Motor neuron (in vitro differentiated cells): ENCODE measurements at regions of chr17 and their contacts with region 1.

Region 1: DNA sequence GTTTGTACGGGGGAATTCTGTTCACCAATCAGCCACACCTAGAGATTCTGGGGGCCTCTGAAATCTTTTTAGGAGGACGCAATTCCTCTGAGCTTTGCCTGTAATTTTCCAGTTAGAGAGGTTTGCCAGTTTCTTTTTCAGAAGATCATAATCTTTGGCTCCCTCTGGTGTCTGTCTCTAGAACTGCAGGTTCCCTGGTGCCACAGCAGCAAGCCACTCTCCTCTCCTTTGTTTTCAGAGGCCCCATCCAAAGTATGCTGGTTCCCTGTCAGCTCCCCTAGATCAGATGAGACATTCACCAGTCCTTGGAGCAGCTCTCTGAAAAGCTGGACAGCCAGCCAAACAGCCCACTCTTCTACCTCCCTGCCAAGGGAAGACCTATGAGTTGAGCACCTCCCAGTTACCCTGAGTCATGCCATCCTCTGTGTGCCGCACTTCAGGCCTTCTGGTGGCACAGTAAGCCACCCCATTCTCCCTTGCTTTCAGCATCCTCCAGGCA is 36.1 kb downstream of the RNF112 start:
- ATAC-seq: peak in 7 of 8 experiments; percentile 5 to 49 (median 39)
- H3K4me3 ChIP-seq: no peak overlapping the region
- H3K27ac ChIP-seq: no peak overlapping the region
- H3K4me1 ChIP-seq: peaks cover 24 to 25% of the 10 kb centered on the region in 2 donors

Region 2: DNA sequence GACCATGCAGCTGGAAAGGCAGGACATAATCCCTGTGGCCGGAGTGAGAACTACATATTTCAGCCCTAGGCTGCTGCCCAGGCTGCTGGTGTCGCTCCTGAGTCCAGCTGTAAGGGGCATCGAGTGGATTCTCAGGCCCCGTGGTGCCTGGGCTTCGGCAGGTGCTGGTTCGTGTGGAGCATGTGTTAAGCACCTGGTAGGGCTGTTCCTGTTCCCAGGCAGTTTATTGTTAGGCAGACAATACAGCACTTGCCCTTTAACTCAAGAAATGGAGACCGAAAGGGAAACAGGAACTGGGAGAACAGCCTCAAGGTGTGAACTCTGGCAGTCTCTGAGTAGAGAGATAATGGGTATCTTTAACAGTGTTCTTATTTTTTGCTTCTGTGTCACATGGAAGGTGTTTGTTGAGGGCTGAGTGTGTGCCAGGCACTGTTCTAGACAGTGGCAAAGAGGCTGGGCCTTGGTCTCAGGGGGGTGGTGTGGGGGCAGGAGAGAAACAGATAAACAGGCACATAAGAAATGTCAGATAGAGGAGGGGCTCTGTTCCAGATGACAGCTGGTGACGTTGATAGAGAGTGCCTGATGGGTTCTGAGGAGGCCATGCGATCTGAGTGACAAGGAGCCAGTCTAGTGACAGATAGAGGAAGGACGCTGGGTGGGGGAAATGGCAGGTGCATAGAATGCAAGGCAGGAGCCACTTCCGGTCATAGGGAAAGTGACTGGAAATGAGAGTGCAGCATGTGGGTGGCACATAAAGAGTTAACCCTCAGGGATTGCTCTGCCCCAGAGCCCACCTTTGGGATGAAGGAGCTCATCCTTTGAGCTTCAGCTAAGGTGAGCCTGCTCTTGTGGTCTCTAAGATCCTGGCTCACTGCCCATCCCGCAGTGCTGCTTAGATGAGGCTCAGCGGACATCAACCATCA is 176.2 kb before region 1 on chr17:
- in situ Hi-C with region 1: loop called in 1 of 9 experiments (anchors 25 kb)
- ATAC-seq: peak in 2 of 8 experiments; percentile 22 to 49
- H3K4me3 ChIP-seq: no peak overlapping the region
- H3K27ac ChIP-seq: no peak overlapping the region
- H3K4me1 ChIP-seq: no peaks in the 10 kb centered on the region

Region 3: GRCh38 chr17:19306160-19307111 is 140.7 kb before region 1 on chr17:
- in situ Hi-C with region 1: no loop called
- ATAC-seq: peak in 2 of 8 experiments; percentile 27 to 53
- H3K4me3 ChIP-seq: no peak overlapping the region
- H3K27ac ChIP-seq: no peak overlapping the region
- H3K4me1 ChIP-seq: peaks cover 0 to 3% of the 10 kb centered on the region in 2 donors

Region 4: DNA sequence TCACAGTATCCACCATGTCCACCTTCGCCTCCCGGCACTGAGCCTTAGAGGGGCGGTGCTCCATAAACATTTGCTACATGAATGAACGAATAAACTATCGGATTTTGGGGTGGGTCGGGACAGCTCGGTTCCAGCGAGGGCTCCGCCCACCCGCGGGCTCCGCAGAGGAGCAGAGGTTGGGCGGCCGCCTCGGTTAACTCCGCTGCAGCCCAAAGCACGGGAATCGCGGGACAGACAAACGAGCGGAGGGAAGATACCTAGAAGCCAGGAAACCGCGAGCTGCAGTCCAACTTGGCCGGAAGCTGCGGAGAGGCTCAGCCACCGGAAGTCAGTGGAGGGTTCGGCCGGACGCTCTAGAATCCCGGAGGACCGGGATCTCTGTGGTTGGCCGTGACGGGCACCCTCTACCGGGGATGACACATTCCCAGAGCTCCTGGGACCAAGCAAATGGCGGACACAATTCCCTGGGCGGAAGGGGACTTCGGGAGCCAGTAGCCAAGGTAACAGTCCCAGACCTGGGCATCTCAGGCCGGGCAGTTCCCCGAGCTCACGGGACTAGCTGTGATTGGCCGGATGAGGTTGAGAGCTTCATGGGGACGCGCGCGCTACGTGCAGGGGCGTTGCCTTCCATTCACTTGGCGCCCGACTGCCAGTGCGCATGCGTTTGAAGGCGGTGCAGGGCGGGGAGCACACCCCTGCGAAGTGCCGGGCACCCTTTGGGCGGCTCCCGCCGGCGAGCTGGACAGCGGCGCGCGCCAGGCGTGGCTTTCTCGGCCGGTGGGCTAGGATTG is 69.3 kb before region 1 on chr17:
- in situ Hi-C with region 1: loop called in 2 of 9 experiments (anchors 5 to 25 kb)
- ATAC-seq: peak; percentile 69 to 89 (median 85)
- H3K4me3 ChIP-seq: peak overlapping the region; percentile 50 to 62 (median 56)
- H3K27ac ChIP-seq: peak overlapping the region; percentile 91 to 97
- H3K4me1 ChIP-seq: peaks cover 6 to 11% of the 10 kb centered on the region in 2 donors